ENCODE measurements at regions of chr4 and their contacts with region 1.

Region 1: GRCh38 chr4:83174844-83175414 is 60.4 kb upstream of the PLAC8 start:
- DNase-seq: peak; percentile 82
- ATAC-seq: peak; percentile 79
- H3K4me3 ChIP-seq: peak overlapping the region; percentile 35 to 73 (median 58)
- H3K4me3 Mint-ChIP-seq: peak overlapping the region; percentile 89
- H3K27ac ChIP-seq: peak overlapping the region; percentile 80 to 87
- H3K27ac Mint-ChIP-seq: peak overlapping the region; percentile 96
- H3K4me1 ChIP-seq: peaks cover 78 to 81% of the 10 kb centered on the region in 2 donors
- H3K4me1 Mint-ChIP-seq: peaks cover 78% of the 10 kb centered on the region
- H3K27me3 ChIP-seq: no peaks in the 10 kb centered on the region
- H3K27me3 Mint-ChIP-seq: no peaks in the 10 kb centered on the region
- CTCF ChIP-seq: no peak

Region 2: DNA sequence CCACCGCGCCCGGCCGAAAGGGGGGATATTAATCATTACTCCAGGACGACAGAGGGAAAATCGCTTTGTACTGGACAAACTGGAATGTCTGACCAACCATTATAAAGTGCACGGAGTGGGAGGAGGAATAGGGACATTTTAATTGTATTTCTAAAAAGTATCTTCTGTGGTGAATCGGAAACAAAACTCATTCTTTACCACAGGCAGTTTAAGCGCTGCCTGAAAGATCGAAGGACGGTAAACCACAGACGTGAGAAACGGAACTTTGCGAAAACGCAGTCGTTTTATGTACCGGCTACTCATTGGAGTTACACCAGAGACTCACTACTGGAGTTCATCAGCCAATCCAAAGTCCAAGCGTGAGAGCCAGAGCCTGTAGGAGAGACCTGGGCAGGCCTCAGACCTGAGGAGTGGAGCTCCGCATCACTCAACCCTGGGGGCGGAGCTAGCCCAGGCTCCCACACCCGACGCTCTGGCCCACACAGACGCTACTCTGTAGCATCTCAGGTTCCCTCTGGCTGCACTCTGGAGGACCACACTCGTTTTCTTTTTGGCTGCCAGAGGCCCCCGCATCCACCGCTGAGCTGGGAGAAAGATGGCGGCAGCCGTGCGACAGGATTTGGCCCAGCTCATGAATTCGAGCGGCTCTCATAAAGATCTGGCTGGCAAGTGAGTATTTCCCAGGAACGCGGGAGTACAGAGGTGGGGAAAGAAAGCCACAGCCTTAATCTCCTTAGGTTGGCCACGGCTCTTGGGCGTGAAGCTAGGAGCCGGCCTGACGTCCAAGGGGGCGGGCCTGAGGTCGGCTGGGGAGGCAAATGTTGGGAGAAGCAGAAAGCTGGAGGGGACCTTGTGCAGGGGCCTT is 140.1 kb before region 1 on chr4 and contains the start of gene COPS4:
- CTCF ChIA-PET with region 1: no interaction called
- POLR2A ChIA-PET with region 1: no interaction called
- intact Hi-C with region 1: no loop called
- DNase-seq: peak; percentile 99
- ATAC-seq: peak; percentile 95
- H3K4me3 ChIP-seq: peak within 1 kb of the TSS; percentile 80 to 94 (median 91)
- H3K4me3 Mint-ChIP-seq: peak within 1 kb of the TSS; percentile 98
- H3K27ac ChIP-seq: peak within 1 kb of the TSS; percentile 84 to 86
- H3K27ac Mint-ChIP-seq: peak within 1 kb of the TSS; percentile 98
- H3K4me1 ChIP-seq: peaks cover 10 to 16% of the 10 kb centered on the region in 2 donors
- H3K4me1 Mint-ChIP-seq: peaks cover 34% of the 10 kb centered on the region
- H3K27me3 ChIP-seq: no peaks in the 10 kb centered on the region
- H3K27me3 Mint-ChIP-seq: no peaks in the 10 kb centered on the region
- CTCF ChIP-seq: peak; percentile 34
- total RNA-seq, gene COPS4: 24.5 and 32.8 TPM in 2 replicates

Region 3: DNA sequence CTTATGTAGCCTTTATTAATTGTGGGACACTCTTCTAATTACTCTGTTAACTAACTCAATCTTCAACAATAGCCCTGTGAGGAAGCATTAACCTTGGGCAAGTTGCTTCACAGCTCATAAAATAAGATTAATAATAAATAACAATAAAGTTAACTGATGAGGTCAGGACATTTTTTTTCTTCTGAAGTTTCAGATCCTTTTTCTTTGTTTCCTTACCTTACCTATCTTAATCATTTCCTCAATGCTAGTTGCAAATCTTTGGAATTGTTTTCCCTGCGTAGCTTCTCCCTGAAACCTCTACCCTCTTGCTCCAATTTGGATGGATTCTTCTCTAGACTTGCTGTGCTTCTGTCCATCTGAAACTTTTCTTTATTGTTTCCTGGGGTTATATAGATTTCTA is 42.9 kb before region 1 on chr4:
- CTCF ChIA-PET with region 1: no interaction called
- POLR2A ChIA-PET with region 1: no interaction called
- intact Hi-C with region 1: loop called (anchors 5 kb)
- DNase-seq: peak; percentile 20
- ATAC-seq: peak; percentile 21
- H3K4me3 ChIP-seq: no peak overlapping the region
- H3K4me3 Mint-ChIP-seq: no peak overlapping the region
- H3K27ac ChIP-seq: peak overlapping the region in 1 of 2 donors; percentile 62
- H3K27ac Mint-ChIP-seq: peak overlapping the region; percentile 74
- H3K4me1 ChIP-seq: peaks cover 18% of the 10 kb centered on the region in 2 donors
- H3K4me1 Mint-ChIP-seq: peaks cover 34% of the 10 kb centered on the region
- H3K27me3 ChIP-seq: no peaks in the 10 kb centered on the region
- H3K27me3 Mint-ChIP-seq: no peaks in the 10 kb centered on the region
- CTCF ChIP-seq: no peak

Region 4: DNA sequence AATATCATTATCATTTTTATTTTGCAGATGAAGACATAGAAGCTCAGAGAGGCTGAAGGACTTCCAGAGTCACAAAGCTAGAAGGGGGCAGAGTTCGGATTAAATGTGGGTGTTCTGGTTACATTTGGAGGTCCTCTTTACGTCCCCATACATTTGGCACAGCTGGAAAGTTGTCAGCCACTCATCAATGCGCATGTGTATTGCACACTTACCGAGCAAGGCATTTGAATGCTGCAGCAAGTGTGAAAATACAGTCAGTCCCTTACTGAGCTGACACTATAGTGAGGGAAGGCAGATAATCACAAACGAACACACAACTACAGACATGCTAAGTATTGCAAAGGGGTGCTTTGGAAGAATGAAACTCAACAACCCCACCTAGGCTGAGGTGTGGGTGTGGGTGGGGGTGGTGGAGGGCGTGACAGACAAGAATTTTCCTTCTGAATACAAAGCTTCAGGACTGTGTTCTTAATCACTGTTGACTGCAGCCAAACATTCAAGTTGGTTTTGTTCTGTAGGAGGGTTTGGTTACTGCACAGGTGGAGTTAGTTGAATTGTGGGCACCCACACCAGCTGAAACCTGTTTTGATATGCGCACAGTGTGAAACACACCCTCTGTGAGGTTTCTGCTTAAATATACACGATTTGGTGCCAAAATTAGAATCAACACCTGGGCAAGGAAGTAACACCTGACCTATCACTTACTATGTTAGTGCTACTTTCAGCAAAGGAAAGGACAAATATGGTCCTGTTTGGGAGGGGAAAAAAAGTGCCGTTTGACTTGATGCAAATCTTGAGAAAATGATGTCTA is 37.3 kb after region 1 on chr4:
- CTCF ChIA-PET with region 1: interaction called, 8 read pairs
- POLR2A ChIA-PET with region 1: interaction called, 8 read pairs
- intact Hi-C with region 1: loop called (anchors 1 kb)
- DNase-seq: peak; percentile 86
- ATAC-seq: peak; percentile 87
- H3K4me3 ChIP-seq: peak overlapping the region in 2 of 5 experiments; percentile 2 to 45
- H3K4me3 Mint-ChIP-seq: peak overlapping the region; percentile 66
- H3K27ac ChIP-seq: peak overlapping the region; percentile 71 to 82
- H3K27ac Mint-ChIP-seq: peak overlapping the region; percentile 90
- H3K4me1 ChIP-seq: peaks cover 85 to 87% of the 10 kb centered on the region in 2 donors
- H3K4me1 Mint-ChIP-seq: peaks cover 83% of the 10 kb centered on the region
- H3K27me3 ChIP-seq: no peaks in the 10 kb centered on the region
- H3K27me3 Mint-ChIP-seq: no peaks in the 10 kb centered on the region
- CTCF ChIP-seq: no peak

Region 5: GRCh38 chr4:83217721-83218522 is 43.0 kb after region 1 on chr4:
- CTCF ChIA-PET with region 1: interaction called, 8 read pairs
- POLR2A ChIA-PET with region 1: interaction called, 8 read pairs
- intact Hi-C with region 1: loop called (anchors 1 kb)
- DNase-seq: peak; percentile 95
- ATAC-seq: peak; percentile 90
- H3K4me3 ChIP-seq: peak overlapping the region in 3 of 5 experiments; percentile 6 to 37 (median 30)
- H3K4me3 Mint-ChIP-seq: peak overlapping the region; percentile 24
- H3K27ac ChIP-seq: peak overlapping the region; percentile 88 to 94
- H3K27ac Mint-ChIP-seq: peak overlapping the region; percentile 92
- H3K4me1 ChIP-seq: peaks cover 90 to 94% of the 10 kb centered on the region in 2 donors
- H3K4me1 Mint-ChIP-seq: peaks cover 87% of the 10 kb centered on the region
- H3K27me3 ChIP-seq: no peaks in the 10 kb centered on the region
- H3K27me3 Mint-ChIP-seq: no peaks in the 10 kb centered on the region
- CTCF ChIP-seq: no peak

Region 6: DNA sequence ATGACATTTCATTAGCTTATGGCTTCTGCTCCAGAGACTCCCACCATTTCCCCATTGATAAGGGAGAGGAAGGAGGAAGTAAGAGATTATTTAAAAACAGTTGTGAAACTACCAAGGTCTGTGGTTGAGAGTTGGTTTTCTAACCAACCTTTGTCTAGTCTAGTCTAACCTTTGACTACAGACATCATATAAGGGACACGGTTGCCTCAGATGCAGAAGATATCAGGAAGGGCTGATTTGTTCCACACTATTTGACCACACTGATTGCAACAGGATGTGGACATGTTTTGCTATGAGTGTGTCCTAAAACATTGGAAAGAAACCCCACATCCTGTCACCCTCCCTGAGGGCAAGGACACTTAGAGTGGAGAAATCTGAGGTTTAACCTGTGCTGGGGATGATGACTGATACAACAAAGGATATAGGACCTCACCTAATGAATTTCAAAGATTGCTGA is 56.7 kb after region 1 on chr4:
- CTCF ChIA-PET with region 1: no interaction called
- POLR2A ChIA-PET with region 1: no interaction called
- intact Hi-C with region 1: loop called (anchors 5 kb)
- DNase-seq: peak; percentile 57
- ATAC-seq: peak; percentile 58
- H3K4me3 ChIP-seq: no peak overlapping the region
- H3K4me3 Mint-ChIP-seq: peak overlapping the region; percentile 59
- H3K27ac ChIP-seq: peak overlapping the region in 1 of 2 donors; percentile 5
- H3K27ac Mint-ChIP-seq: peak overlapping the region; percentile 81
- H3K4me1 ChIP-seq: peaks cover 29 to 39% of the 10 kb centered on the region in 2 donors
- H3K4me1 Mint-ChIP-seq: peaks cover 53% of the 10 kb centered on the region
- H3K27me3 ChIP-seq: no peaks in the 10 kb centered on the region
- H3K27me3 Mint-ChIP-seq: no peaks in the 10 kb centered on the region
- CTCF ChIP-seq: no peak

Measured in B cell (primary cell).